Ovary (tissue), 10 donors: ENCODE measurements at regions of chr17 and their contacts with region 1.

Region 1: GRCh38 chr17:8837563-8838075 is 29.9 kb downstream of the PIK3R6 start:
- DNase-seq: no peak
- H3K4me3 ChIP-seq: no peak overlapping the region
- H3K27ac ChIP-seq: no peak overlapping the region
- H3K4me1 ChIP-seq: no peaks in the 10 kb centered on the region
- H3K27me3 ChIP-seq: no peaks in the 10 kb centered on the region
- CTCF ChIP-seq: no peak
- EP300 ChIP-seq: no peak
- POLR2A ChIP-seq: no peak

Region 2: DNA sequence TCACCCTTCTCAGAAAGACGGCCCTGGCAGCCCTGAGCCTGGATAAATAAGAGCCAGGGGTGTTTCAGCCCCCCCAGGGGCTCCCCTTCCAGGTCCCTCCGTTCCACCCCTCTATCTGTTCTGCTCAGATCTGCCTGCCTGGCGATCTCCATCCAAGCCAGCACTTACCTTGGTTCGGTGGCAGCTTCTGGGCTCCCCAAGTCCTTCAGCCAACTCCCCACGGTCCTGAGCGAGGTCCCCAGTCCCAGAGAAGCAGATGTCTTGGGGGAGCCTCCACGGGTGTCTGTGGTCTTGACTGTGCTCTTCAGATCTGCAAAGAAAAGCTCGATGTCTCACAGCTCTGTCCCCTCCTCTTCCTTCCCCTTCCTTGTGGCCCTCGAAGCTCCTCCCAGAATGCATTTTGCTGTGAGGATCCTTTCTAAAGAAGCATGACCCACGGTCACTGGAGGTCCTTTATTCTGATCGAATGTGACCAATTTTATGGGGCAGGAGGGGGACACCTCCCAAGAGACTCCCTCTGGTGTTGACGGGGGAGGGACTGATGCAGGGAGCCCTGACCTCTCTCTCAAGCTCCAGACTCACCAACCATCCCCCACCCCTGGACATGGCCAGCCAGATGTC is 29.9 kb after region 1 on chr17 and contains the start of gene PIK3R6:
- intact Hi-C with region 1: no loop called
- DNase-seq: no peak
- H3K4me3 ChIP-seq: no peak within 1 kb of the TSS
- H3K27ac ChIP-seq: no peak within 1 kb of the TSS
- H3K4me1 ChIP-seq: no peaks in the 10 kb centered on the region
- H3K27me3 ChIP-seq: no peaks in the 10 kb centered on the region
- CTCF ChIP-seq: no peak
- EP300 ChIP-seq: no peak
- POLR2A ChIP-seq: no peak
- total RNA-seq, gene PIK3R6: 0.12 to 0.92 (median 0.20) TPM

Region 3: DNA sequence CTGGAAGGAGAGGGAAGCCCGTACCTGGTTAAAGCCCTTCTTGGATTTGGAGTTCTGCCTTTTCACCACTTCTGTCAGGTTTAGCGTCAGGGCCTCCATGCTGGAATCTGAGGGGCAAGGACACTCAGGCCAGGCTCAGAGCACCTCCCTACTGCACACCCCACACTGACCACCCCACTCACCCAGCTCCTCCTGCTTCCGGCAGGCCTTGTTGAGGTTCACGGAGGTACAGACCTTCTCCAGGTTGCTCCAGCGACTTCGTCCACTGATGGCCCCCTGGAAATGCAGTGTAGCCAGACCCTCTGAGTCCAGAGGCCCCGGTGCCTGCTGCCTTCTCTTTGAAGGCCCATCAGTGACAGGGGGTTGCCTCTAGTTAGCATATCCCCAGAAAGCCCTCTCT is 44.0 kb after region 1 on chr17:
- intact Hi-C with region 1: loop called in 1 of 4 experiments (anchors 2 kb)
- DNase-seq: no peak
- H3K4me3 ChIP-seq: no peak overlapping the region
- H3K27ac ChIP-seq: no peak overlapping the region
- H3K4me1 ChIP-seq: no peaks in the 10 kb centered on the region
- H3K27me3 ChIP-seq: no peaks in the 10 kb centered on the region
- CTCF ChIP-seq: no peak
- EP300 ChIP-seq: no peak
- POLR2A ChIP-seq: no peak

Region 4: DNA sequence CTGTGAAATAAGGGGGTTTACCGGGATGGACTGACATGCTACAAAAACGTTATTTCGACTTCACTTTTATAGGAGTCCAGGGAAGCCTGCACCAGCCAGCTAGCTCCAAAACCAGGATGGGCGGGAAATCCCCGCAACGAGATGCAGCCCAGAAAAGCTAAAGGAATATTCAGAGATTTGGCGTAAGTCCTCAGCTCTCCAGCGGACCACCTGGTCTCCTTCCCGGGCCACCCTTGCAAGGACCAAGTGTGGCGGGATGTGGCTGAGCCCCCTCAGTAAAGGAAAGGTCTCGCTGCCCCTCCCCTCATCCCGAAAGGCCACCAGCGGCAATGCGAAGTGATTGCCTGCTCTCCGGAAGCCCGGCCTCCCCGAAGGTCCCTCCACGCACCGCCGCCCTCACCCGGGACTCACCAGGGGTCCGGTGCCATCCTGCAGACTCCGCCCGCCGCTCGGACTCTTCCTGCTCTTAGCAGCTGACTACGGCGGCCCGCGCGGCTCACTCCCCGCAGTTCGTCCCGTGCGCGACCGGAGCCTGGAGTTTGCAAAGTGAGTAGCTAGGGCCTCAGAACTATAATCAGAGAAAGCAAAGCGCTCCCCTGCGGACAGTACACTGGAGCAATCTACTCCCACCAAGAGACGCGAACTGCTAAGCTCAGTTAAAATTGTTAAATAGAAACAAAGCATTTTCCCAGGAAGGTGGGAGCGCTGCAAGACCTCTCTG is 737.9 kb after region 1 on chr17 and contains the start of gene STX8:
- intact Hi-C with region 1: no loop called
- DNase-seq: peak; percentile 83 to 94 (median 88)
- H3K4me3 ChIP-seq: peak within 1 kb of the TSS; percentile 93
- H3K27ac ChIP-seq: no peak within 1 kb of the TSS
- H3K4me1 ChIP-seq: peaks cover 8% of the 10 kb centered on the region
- H3K27me3 ChIP-seq: no peaks in the 10 kb centered on the region
- CTCF ChIP-seq: peak in 1 of 3 donors; percentile 10
- EP300 ChIP-seq: no peak
- POLR2A ChIP-seq: no peak
- total RNA-seq, gene STX8: 45.2 to 67.8 (median 53.8) TPM